ENCODE measurements at regions of chr9 and their contacts with region 1.

Region 1: DNA sequence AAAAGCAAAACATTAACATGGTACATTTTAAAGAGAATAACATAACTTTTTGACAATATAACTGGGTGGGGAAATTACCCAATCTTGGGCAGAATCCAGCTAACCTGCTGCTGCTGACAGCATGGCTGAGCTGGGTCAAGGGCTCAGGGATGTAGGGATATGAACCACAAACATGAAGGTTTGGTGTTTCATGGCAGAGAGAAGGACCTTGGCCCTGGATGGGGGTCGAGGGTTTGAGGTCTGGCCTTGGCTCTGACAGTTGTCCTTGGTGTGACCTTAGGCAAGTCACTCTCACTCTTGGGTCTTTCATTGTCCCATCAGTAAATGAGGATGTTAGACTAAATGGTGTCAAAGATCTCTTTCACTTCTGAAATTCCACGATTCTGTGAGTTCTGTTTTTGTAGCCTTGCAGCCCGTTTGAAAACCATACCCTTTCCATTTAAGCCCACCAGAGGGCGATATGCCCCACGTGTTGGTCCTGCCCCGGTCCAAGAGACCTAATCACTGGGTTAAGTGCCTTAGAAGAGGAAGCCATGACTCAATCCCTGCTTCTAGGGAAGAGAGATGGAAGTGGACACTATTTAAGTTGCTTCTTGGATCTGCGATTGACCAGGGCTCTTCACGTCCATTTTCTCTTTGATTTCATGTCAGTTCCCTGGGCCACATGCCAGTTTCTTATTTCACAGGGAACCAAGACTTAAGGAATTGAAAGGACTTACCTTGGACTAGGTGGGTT is 56.8 kb upstream of the TEX48 start:
- DNase-seq: peak; percentile 80 to 89
- H3K4me3 ChIP-seq: no peak overlapping the region
- H3K27ac ChIP-seq: no peak overlapping the region
- H3K4me1 ChIP-seq: peaks cover 0 to 5% (median 2%) of the 10 kb centered on the region in 4 donors
- H3K27me3 ChIP-seq: no peaks in the 10 kb centered on the region
- CTCF ChIP-seq: peak in 6 of 7 experiments; percentile 61 to 93 (median 82)
- EP300 ChIP-seq: no peak
- POLR2A ChIP-seq: no peak

Region 2: DNA sequence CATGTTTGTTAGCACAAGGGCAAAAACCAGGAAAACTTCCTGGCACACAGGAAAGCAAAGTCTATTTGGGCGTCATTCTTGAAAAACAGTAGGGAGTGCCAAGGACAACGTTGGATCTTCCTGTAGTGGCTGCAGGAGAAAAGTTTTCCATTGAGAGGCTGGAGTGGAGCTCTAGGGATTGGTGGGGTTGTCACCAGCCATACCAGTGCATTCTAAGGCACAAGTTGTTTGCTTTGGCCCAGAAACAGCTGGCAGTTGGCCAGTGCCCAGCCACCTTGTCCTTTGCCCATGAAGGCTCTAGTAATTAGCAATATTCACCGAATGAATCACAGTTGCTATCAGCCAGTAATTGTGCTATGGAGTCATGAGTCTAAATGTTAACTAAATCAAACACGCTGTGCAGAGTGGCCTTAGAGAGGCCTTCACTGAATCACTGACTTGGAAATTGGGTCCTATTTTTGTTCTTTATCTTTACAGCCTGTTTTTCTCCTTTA is 40.6 kb after region 1 on chr9:
- intact Hi-C with region 1: no loop called
- DNase-seq: peak; percentile 94 to 97
- H3K4me3 ChIP-seq: no peak overlapping the region
- H3K27ac ChIP-seq: peak overlapping the region; percentile 59 to 73 (median 71)
- H3K4me1 ChIP-seq: peaks cover 0 to 16% (median 8%) of the 10 kb centered on the region in 4 donors
- H3K27me3 ChIP-seq: no peaks in the 10 kb centered on the region
- CTCF ChIP-seq: no peak
- EP300 ChIP-seq: no peak
- POLR2A ChIP-seq: no peak

Region 3: GRCh38 chr9:114820776-114821501 is 82.2 kb after region 1 on chr9:
- intact Hi-C with region 1: no loop called
- DNase-seq: no peak
- H3K4me3 ChIP-seq: no peak overlapping the region
- H3K27ac ChIP-seq: no peak overlapping the region
- H3K4me1 ChIP-seq: no peaks in the 10 kb centered on the region
- H3K27me3 ChIP-seq: no peaks in the 10 kb centered on the region
- CTCF ChIP-seq: no peak
- EP300 ChIP-seq: no peak
- POLR2A ChIP-seq: no peak

Region 4: GRCh38 chr9:114911167-114911821 is 172.5 kb after region 1 on chr9:
- intact Hi-C with region 1: loop called (anchors 5 kb)
- DNase-seq: peak in 1 of 2 donors; percentile 77
- H3K4me3 ChIP-seq: no peak overlapping the region
- H3K27ac ChIP-seq: no peak overlapping the region
- H3K4me1 ChIP-seq: peaks cover 0 to 17% (median 3%) of the 10 kb centered on the region in 4 donors
- H3K27me3 ChIP-seq: no peaks in the 10 kb centered on the region
- CTCF ChIP-seq: peak in 5 of 7 experiments; percentile 33 to 76 (median 61)
- EP300 ChIP-seq: no peak
- POLR2A ChIP-seq: no peak

Region 5: GRCh38 chr9:115013998-115014397 is 275.2 kb after region 1 on chr9:
- intact Hi-C with region 1: loop called (anchors 5 kb)
- DNase-seq: peak; percentile 70 to 89
- H3K4me3 ChIP-seq: no peak overlapping the region
- H3K27ac ChIP-seq: no peak overlapping the region
- H3K4me1 ChIP-seq: peaks cover 0 to 12% (median 0%) of the 10 kb centered on the region in 4 donors
- H3K27me3 ChIP-seq: no peaks in the 10 kb centered on the region
- CTCF ChIP-seq: peak in 5 of 7 experiments; percentile 48 to 86 (median 80)
- EP300 ChIP-seq: no peak
- POLR2A ChIP-seq: no peak